ENCODE measurements at regions of chr19 and their contacts with region 1.

Region 1: DNA sequence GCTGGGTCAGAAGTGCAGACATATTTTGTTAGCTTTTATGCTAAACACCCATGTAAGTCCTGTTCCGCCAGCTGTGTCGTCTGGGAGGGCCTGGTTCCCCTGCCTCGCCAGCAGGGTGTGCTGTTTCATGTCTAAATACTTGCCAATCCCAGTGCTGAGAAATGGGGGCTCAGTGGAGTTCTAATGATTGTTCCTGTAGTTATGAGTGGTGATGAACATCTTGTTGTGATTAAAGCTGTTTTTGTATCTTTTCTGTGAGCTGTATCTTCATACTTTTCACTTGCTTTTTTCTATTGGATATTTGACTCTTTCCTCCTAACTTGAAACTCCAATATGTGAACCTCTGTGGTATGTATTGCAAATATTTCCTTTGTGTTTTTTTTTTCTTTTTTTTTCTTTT is 32.7 kb downstream of the KDM4B start:
- DNase-seq: peak; percentile 49
- H3K4me3 ChIP-seq: no peak overlapping the region
- H3K27ac ChIP-seq: no peak overlapping the region
- H3K4me1 ChIP-seq: no peaks in the 10 kb centered on the region
- H3K27me3 ChIP-seq: no peaks in the 10 kb centered on the region
- CTCF ChIP-seq: peak; percentile 77 to 88
- POLR2A ChIP-seq: no peak

Region 2: DNA sequence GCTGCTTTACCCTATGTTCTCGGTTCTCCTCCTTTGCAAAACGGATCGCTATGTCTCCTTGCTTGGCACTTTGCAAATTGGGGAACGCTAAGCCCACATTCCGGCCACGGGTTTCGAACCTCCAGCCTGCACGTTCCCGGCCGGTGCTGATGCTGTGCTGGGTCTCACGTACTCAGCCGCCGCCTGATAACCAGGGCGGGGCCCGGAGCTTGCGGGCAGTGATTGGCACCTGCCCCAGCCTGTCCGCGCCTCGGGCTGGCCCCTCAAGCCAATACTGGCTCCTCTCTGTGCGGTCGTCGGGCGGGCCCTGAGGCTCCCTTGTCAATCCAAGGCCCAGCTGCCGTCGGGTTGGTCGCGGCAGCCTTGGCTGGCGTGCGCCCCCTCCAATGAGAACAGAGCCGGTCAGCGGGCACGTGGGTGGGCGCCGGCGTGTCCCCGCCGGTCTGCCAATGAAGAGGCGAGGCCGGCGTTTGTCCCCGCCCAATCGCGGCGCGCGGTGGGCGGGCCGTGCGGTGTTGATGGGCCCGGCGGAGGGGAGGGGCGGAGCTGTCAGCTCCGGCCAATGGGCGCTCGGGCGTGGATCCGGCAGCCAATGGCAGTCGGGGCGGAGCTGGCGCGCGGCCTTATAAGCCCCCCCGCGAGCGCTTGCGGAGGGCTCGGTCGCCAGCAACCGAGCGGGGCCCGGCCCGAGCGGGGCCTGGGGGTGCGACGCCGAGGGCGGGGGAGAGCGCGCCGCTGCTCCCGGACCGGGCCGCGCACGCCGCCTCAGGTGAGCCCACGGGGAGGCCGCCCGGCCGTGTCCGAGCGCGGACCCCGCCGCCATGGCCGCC is 32.9 kb before region 1 on chr19 and contains the start of gene KDM4B:
- CTCF ChIA-PET with region 1: interaction called, 10 read pairs
- POLR2A ChIA-PET with region 1: no interaction called
- dilution Hi-C with region 1: no loop called
- intact Hi-C with region 1: no loop called
- DNase-seq: peak; percentile 100
- H3K4me3 ChIP-seq: peak within 1 kb of the TSS; percentile 45 to 54 (median 48)
- H3K27ac ChIP-seq: no peak within 1 kb of the TSS
- H3K4me1 ChIP-seq: peaks cover 23% of the 10 kb centered on the region
- H3K27me3 ChIP-seq: no peaks in the 10 kb centered on the region
- CTCF ChIP-seq: no peak
- POLR2A ChIP-seq: peak; percentile 85
- total RNA-seq, gene KDM4B: 30.8 and 37.2 TPM in 2 replicates

Region 3: DNA sequence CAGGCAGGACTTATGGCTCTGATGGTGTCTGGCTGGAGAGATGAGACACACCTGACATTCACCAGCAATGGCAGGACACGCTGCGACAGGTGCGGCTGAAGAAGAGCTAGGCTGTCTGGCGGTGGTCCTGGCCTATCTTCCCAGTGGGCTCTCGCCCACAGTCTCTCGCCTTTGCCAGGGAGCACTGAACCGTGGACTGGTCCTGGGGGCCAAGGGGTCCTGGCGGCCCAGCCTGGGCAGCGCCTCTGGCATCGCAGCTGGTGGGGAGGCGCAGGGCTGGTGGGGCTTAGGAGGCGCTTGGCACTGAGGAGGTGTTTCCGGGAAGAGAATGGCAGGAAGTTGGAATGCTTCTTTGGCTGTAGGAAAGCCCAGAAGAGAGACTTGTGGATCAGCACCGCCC is 18.3 kb before region 1 on chr19:
- CTCF ChIA-PET with region 1: interaction called, 17 read pairs
- POLR2A ChIA-PET with region 1: no interaction called
- dilution Hi-C with region 1: no loop called
- intact Hi-C with region 1: no loop called
- DNase-seq: peak; percentile 44
- H3K4me3 ChIP-seq: no peak overlapping the region
- H3K27ac ChIP-seq: no peak overlapping the region
- H3K4me1 ChIP-seq: peaks cover 10% of the 10 kb centered on the region
- H3K27me3 ChIP-seq: no peaks in the 10 kb centered on the region
- CTCF ChIP-seq: no peak
- POLR2A ChIP-seq: no peak

Region 4: GRCh38 chr19:5013761-5014160 is 12.1 kb after region 1 on chr19:
- CTCF ChIA-PET with region 1: interaction called, 12 read pairs
- POLR2A ChIA-PET with region 1: no interaction called
- dilution Hi-C with region 1: no loop called
- intact Hi-C with region 1: no loop called
- DNase-seq: no peak
- H3K4me3 ChIP-seq: no peak overlapping the region
- H3K27ac ChIP-seq: no peak overlapping the region
- H3K4me1 ChIP-seq: no peaks in the 10 kb centered on the region
- H3K27me3 ChIP-seq: no peaks in the 10 kb centered on the region
- CTCF ChIP-seq: no peak
- POLR2A ChIP-seq: no peak

Region 5: DNA sequence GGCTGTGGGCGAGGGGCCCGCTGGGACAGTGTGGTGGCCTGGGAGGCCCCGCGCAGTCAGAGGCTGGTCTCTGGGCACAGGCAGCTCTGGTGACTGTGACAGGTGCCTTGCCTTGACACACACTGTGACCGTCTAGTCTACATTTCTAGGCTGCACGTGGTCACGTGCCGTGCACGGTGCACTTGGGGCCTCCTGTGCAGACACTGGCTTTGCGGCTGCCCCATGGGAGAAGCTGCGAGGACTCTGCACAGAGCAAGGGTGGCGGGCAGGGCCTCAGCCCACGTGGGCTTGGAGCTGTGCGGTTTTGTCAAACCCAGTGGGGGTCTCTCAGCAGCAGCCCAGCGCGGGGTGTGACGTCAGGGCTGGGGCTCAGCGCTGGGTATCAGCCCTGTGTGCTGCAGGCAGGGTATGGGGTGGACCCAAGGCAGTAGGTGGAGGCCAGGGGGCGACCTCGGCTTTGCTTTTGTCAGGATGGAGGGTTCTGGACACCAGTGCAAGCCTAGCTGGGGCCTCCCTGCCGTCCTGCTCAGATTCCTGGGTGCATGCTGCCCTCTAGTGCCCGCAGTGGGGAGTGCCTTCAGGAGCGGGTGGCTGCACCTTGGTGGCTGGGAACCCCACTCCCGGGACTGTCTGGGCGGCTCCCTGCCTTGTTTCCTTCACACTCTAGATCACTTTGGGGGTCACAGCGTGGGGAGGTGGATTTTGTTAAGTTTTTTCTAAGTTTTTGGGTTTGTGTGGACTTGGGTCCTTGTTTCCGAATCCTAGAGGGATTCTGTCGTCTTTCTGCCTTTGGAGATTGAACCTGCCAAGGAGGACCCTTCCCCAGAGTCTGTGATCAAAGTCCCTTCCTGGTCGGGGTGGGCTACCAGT is 29.9 kb after region 1 on chr19:
- CTCF ChIA-PET with region 1: interaction called, 54 read pairs
- POLR2A ChIA-PET with region 1: interaction called, 4 read pairs
- dilution Hi-C with region 1: no loop called
- intact Hi-C with region 1: loop called (anchors 1 kb)
- DNase-seq: peak; percentile 61
- H3K4me3 ChIP-seq: no peak overlapping the region
- H3K27ac ChIP-seq: no peak overlapping the region
- H3K4me1 ChIP-seq: no peaks in the 10 kb centered on the region
- H3K27me3 ChIP-seq: no peaks in the 10 kb centered on the region
- CTCF ChIP-seq: peak; percentile 92 to 95
- POLR2A ChIP-seq: no peak

Region 6: GRCh38 chr19:5154129-5154798 is 152.6 kb after region 1 on chr19:
- CTCF ChIA-PET with region 1: no interaction called
- POLR2A ChIA-PET with region 1: no interaction called
- dilution Hi-C with region 1: no loop called
- intact Hi-C with region 1: no loop called
- DNase-seq: no peak
- H3K4me3 ChIP-seq: no peak overlapping the region
- H3K27ac ChIP-seq: no peak overlapping the region
- H3K4me1 ChIP-seq: no peaks in the 10 kb centered on the region
- H3K27me3 ChIP-seq: peaks cover 0 to 1% of the 10 kb centered on the region in 2 experiments
- CTCF ChIP-seq: peak; percentile 15 to 72
- POLR2A ChIP-seq: no peak